ENCODE measurements at regions of chr14 and their contacts with region 1.

Region 1: DNA sequence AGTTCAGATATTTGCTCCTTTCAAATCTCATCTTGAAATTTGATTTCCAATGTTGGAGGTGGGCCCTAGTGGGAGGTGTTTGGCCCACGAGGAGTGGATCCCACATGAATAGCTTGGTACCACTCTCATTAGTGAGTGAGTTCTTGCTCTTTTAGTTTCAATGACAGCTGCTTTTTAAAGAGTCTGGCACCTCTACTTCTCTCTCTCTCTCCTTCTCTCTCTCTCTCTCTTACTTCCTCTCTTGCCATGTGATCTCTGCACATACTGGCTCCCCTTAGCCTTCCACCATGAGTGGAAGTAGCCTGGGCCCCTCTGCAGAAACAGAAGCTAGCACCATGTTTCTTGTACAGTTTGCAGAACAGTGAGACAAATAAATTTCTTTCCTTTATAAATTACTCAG is 25.1 kb downstream of the GPR65 start:
- DNase-seq: no peak
- H3K4me3 ChIP-seq: no peak overlapping the region
- H3K27ac ChIP-seq: no peak overlapping the region
- H3K4me1 ChIP-seq: no peaks in the 10 kb centered on the region
- H3K27me3 ChIP-seq: no peaks in the 10 kb centered on the region
- CTCF ChIP-seq: no peak
- EP300 ChIP-seq: no peak
- POLR2A ChIP-seq: no peak
- RAD21 ChIP-seq: no peak

Region 2: GRCh38 chr14:88013750-88014349 is 16.2 kb before region 1 on chr14:
- CTCF ChIA-PET with region 1: interaction called, 18 read pairs
- POLR2A ChIA-PET with region 1: no interaction called
- DNase-seq: peak in 1 of 2 experiments; percentile 69
- H3K4me3 ChIP-seq: no peak overlapping the region
- H3K27ac ChIP-seq: no peak overlapping the region
- H3K4me1 ChIP-seq: peaks cover 0 to 3% (median 0%) of the 10 kb centered on the region in 4 experiments; a peak in 1 of 7 replicates
- H3K27me3 ChIP-seq: no peaks in the 10 kb centered on the region
- CTCF ChIP-seq: peak; percentile 59 to 87 (median 85)
- EP300 ChIP-seq: no peak
- POLR2A ChIP-seq: no peak
- RAD21 ChIP-seq: peak; percentile 93 to 94